Ascending aorta (tissue), 2 donors: ENCODE measurements at regions of chr20 and their contacts with region 1.

Region 1: DNA sequence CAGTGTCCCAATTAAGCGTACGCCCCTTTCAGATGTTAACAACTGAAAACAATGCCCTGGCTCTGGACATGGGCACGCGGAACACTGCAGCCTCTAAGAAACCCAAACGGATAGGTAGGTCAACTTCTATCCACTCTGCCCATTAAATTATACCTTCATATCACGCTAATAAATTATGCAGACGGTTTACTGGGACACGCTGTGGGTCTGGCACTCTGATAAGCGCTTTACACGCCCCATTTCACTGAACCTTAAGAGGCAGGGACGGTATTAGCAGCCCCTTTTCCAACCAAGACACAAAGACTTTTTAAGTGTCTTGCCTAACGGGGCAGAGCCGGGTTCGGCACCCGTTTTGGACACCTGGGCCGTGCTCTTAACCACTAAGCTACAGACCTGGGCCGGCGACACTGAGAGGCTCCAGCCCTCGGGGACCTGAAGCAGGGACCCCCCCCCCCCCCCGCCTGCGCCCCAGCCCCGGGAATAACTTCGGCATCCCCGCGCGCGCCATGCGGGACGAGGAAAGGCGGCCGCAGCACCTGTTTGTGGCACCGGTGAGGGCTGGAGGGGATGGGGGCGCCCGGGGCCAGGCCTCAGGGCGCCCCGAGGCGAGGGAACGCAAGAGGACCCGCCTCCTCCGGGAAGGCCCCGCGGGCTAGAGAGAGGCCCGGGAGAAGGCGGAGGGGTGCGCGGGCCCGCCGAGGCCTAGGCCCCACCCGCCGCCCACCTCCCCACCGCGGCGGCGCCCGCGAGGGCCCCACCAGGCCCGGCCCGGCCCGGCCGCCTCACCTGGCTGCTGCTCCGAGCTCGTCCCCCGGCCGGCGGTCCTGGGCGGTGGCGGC is 585 bp downstream of the STAU1 start:
- DNase-seq: no peak
- H3K4me3 ChIP-seq: peak overlapping the region; percentile 92 to 97
- H3K27ac ChIP-seq: peak overlapping the region; percentile 93 to 98
- H3K4me1 ChIP-seq: peaks cover 0 to 7% of the 10 kb centered on the region in 2 donors
- H3K27me3 ChIP-seq: no peaks in the 10 kb centered on the region
- CTCF ChIP-seq: no peak

Region 2: GRCh38 chr20:49132995-49133478 is 54.5 kb before region 1 on chr20:
- intact Hi-C with region 1: loop called (anchors 1 kb)
- DNase-seq: no peak
- H3K4me3 ChIP-seq: no peak overlapping the region
- H3K27ac ChIP-seq: peak overlapping the region in 1 of 2 donors; percentile 17
- H3K4me1 ChIP-seq: peaks cover 0 to 3% of the 10 kb centered on the region in 2 donors
- H3K27me3 ChIP-seq: no peaks in the 10 kb centered on the region
- CTCF ChIP-seq: peak; percentile 41 to 68 (median 56)

Region 3: DNA sequence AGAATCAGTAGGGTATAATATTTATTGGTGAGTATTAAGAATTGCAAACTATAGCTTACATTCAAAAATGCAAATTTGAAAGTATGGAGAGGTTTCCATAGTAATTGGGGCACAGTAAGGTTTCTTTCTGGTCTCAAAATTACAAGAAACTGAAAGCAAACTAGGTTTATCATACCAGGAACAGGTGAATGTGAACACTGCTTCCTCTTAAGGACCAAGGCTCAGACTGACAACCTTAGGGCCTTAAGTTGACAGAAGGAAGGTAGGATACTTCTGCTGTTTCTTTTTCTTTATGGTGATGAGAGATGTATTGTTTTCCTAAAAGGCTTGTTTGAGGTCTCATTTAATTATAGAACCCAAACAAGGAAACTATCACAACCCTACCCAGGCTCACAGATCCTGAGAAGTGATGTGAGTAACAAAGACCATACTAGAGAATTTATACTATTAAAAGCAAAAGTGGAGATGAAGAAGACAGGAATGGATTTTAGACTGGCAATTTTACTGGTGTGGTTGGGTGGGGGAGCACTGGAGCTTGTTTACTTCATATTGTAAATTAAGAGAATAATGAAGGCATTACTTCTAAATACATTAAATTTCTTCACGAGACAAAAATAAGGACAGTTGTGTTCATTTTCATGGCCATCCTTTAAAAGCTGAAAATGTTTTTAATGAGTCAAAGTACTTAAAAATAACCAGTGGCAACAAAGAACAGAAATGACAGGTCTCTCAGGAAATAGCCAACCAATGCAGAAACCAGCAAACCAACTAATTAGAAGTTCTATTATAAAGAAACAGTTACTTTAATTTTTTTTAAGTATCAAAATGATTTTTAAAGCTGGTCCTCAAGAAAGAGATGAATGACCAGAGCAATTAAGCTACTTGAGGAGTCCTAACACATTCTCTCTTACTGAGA is 20.8 kb before region 1 on chr20:
- intact Hi-C with region 1: loop called (anchors 2 kb)
- DNase-seq: no peak
- H3K4me3 ChIP-seq: peak overlapping the region in 1 of 2 donors; percentile 10
- H3K27ac ChIP-seq: peak overlapping the region; percentile 64 to 68
- H3K4me1 ChIP-seq: peaks cover 2 to 23% of the 10 kb centered on the region in 2 donors
- H3K27me3 ChIP-seq: no peaks in the 10 kb centered on the region
- CTCF ChIP-seq: no peak

Region 4: DNA sequence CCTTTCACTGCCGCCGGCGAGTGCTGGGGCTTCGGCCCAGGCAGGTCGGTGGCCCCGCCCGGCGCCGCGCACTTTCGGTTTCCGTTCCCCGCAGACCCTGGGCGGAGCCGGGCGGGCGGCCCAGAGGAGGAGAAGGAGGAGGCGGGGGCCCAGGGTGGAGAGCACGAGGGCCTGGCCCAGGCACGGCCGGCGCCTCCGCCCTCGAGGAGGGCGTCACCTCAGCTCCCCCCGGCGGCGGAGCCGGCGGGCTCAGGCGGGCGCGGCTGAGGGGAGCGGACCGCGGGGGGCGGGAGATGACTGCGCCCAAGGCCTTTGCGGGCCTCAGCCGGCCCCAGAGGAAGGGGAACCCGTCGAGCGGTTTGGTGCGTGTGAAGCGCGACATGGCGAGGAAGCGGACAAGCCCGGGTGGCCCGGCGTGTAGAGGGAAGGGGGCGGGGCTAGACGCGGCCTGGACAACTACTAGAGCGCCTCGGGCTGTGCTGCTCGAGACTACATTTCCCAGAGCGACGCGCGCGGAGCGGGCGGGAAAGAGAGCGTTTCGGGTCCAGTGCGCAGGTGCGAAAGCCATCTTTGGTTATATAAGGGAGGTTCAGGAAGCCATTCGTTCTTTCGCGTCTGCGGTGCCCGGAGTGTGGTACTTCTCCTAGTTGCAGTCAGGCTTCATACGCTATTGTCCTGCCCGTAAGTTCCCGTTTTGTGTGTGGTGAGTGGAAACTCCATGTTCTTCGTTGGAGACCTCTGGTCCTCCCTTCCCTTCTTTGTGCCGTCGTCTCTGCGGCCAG is 90.7 kb after region 1 on chr20 and contains the start of gene ZNFX1:
- intact Hi-C with region 1: loop called (anchors 1 kb)
- DNase-seq: peak; percentile 95 to 99
- H3K4me3 ChIP-seq: peak within 1 kb of the TSS; percentile 75 to 98
- H3K27ac ChIP-seq: peak within 1 kb of the TSS; percentile 94 to 99
- H3K4me1 ChIP-seq: peaks cover 21 to 26% of the 10 kb centered on the region in 2 donors
- H3K27me3 ChIP-seq: no peaks in the 10 kb centered on the region
- CTCF ChIP-seq: no peak
- total RNA-seq, gene ZNFX1: 49.1 TPM